Activated CD8-positive, alpha-beta memory T cell treated with anti-CD3 and anti-CD28 coated beads, Interleukin-2, amount 10 ng/mL, durations not matched to agents 7 days and 5 days (primary cell): ENCODE measurements at regions of chr22 and their contacts with region 1.

Region 1: GRCh38 chr22:36856121-36856791 is 4.5 kb upstream of the NCF4 start:
- DNase-seq: peak; percentile 94
- ATAC-seq: peak; percentile 54
- H3K4me3 Mint-ChIP-seq: peak overlapping the region; percentile 44
- H3K27ac Mint-ChIP-seq: peak overlapping the region; percentile 54
- H3K4me1 Mint-ChIP-seq: peaks cover 73% of the 10 kb centered on the region
- H3K27me3 Mint-ChIP-seq: peaks cover under 1% of the 10 kb centered on the region

Region 2: GRCh38 chr22:36546092-36546804 is 310.0 kb before region 1 on chr22:
- CTCF ChIA-PET with region 1: interaction called, 17 read pairs
- DNase-seq: peak; percentile 55
- ATAC-seq: no peak
- H3K4me3 Mint-ChIP-seq: no peak overlapping the region
- H3K27ac Mint-ChIP-seq: no peak overlapping the region
- H3K4me1 Mint-ChIP-seq: peaks cover 45% of the 10 kb centered on the region
- H3K27me3 Mint-ChIP-seq: peaks cover 14% of the 10 kb centered on the region

Region 3: DNA sequence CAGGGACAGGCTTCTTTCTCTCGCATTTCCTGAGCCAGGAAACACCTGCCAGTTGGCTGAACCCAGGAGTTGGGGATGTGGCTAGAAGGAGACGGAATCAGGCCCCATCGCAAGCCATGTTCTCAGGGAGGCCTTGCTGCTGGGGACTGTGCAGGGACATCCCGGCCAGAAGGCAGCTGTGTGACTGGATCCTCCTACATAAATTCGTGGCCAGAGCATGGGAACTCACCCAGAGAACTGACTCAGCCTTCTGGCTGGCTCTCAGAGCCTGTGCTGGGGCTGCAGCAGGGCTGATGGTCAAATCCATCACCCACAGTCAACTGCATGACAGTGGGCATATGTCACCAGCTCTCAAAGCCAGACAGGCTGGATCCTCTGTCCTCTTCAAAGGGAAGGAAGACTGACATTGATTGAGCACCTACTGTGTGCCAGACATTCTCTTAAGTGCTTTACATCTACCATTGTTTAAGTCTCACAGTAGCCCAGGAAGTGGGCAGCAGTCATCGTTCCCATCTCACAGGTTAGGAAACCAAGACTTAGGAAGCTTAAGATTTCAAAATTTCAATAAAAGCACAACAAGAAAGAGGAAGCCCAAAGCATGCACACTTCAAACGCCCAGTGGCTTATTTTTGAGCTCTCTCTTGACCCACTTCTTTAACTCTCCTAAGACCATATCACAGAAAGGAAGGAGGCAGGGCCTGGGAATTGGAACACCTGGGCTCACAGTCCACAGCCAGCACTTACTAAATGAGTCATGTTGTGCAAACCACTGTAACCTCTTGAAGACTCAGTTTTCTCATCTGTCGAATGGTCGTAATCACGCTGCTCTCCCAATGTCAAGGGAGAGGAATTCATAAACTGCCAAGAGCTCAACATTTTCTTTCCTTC is 121.8 kb before region 1 on chr22:
- CTCF ChIA-PET with region 1: no interaction called
- DNase-seq: no peak
- ATAC-seq: no peak
- H3K4me3 Mint-ChIP-seq: no peak overlapping the region
- H3K27ac Mint-ChIP-seq: no peak overlapping the region
- H3K4me1 Mint-ChIP-seq: no peaks in the 10 kb centered on the region
- H3K27me3 Mint-ChIP-seq: peaks cover 24% of the 10 kb centered on the region

Region 4: GRCh38 chr22:36775964-36776669 is 80.1 kb before region 1 on chr22 and contains the start of gene IFT27:
- CTCF ChIA-PET with region 1: interaction called, 180 read pairs
- DNase-seq: peak; percentile 99
- ATAC-seq: peak; percentile 93
- H3K4me3 Mint-ChIP-seq: peak within 1 kb of the TSS; percentile 85
- H3K27ac Mint-ChIP-seq: peak within 1 kb of the TSS; percentile 92
- H3K4me1 Mint-ChIP-seq: peaks cover 35% of the 10 kb centered on the region
- H3K27me3 Mint-ChIP-seq: no peaks in the 10 kb centered on the region
- total RNA-seq, gene IFT27: 30.3 to 33.7 TPM

Region 5: DNA sequence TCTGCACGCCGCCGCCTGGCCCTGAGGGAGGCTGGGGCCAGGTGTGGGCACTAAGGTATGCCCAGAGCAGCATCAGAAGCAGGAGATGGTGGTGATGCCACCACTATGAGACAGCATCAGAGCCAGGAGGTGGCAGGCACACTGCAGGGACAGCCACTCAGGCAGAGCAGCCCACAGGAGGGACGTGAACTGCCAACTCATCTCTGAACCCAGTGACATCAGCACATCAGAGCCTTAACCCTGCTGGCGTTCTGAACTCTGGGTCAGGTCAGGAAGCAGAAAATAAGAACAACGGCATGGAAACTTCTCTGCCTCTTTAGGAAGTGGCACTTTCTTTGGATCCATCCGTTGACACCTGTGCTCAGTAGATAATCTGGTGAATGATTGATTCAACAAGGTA is 65.6 kb before region 1 on chr22:
- CTCF ChIA-PET with region 1: interaction called, 180 read pairs
- DNase-seq: peak; percentile 80
- ATAC-seq: peak; percentile 99
- H3K4me3 Mint-ChIP-seq: no peak overlapping the region
- H3K27ac Mint-ChIP-seq: peak overlapping the region; percentile 13
- H3K4me1 Mint-ChIP-seq: peaks cover 13% of the 10 kb centered on the region
- H3K27me3 Mint-ChIP-seq: peaks cover 27% of the 10 kb centered on the region

Region 6: DNA sequence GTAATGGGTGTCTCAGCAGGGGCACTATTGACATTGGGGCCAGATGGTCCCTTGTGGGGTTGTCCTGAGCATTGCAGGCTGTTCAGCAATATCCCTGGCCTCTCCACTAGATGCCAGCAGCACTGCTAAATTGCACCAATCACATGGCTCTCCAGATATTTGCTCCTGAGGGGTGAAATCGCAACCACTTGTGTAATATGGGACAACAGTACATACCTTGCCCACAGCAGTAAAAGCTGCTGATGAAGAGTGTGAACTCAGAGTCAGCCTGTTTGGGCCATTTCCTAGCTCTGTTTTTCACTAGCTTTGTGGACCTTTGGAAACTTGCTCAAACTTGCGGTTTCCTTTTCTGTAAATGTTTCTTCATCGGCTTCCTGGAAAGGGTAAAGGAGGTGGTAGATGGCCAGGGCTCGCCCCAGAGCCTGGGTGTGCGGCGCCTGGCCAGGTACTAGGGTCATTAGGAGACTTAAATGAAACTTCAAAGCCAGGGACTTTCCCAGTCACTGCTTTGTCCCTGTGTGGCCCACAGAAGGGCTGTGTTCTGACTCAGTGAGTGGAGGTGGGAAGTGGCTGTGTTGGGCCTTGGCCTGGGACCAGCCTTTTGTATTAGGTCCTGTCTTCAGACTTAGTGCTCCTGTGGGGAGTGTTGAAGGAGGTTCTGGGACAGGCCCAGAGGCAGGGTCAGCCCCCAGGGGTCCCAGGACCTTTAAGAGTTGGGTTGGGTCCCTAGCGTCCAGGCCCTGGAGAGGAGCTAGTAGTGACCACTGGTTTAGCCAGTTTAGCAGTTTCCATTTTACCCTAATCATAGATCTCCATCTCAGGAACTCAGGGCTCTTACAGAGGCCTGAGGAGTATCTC is 17.7 kb after region 1 on chr22:
- CTCF ChIA-PET with region 1: interaction called, 66 read pairs
- DNase-seq: peak; percentile 84
- ATAC-seq: peak; percentile 87
- H3K4me3 Mint-ChIP-seq: no peak overlapping the region
- H3K27ac Mint-ChIP-seq: peak overlapping the region; percentile 95
- H3K4me1 Mint-ChIP-seq: peaks cover 35% of the 10 kb centered on the region
- H3K27me3 Mint-ChIP-seq: no peaks in the 10 kb centered on the region

Region 7: DNA sequence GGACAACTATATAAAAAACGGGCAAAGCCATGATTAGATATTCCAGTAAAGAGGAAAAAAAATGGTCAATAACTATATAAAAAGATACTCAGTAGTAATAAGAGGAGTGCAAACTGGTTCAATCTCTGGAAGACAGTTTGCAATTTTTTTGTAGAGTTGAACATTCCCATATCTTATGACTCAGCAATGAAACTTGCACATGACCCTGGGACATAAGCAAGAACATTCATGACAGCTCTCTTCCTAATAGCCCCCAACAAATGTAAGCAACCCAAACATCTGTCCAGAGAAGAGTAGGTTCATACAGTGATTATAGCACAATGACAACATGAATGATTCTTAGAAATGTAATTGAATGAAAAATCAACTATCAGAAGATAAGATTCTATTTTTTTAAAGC is 35.4 kb after region 1 on chr22:
- CTCF ChIA-PET with region 1: interaction called, 10 read pairs
- DNase-seq: no peak
- ATAC-seq: no peak
- H3K4me3 Mint-ChIP-seq: no peak overlapping the region
- H3K27ac Mint-ChIP-seq: no peak overlapping the region
- H3K4me1 Mint-ChIP-seq: peaks cover 40% of the 10 kb centered on the region
- H3K27me3 Mint-ChIP-seq: peaks cover 5% of the 10 kb centered on the region

Region 8: GRCh38 chr22:36966851-36967540 is 110.7 kb after region 1 on chr22:
- CTCF ChIA-PET with region 1: interaction called, 17 read pairs
- DNase-seq: no peak
- ATAC-seq: no peak
- H3K4me3 Mint-ChIP-seq: no peak overlapping the region
- H3K27ac Mint-ChIP-seq: no peak overlapping the region
- H3K4me1 Mint-ChIP-seq: peaks cover 8% of the 10 kb centered on the region
- H3K27me3 Mint-ChIP-seq: peaks cover 16% of the 10 kb centered on the region